ENCODE measurements at regions of chr4 and their contacts with region 1.

Region 1: GRCh38 chr4:94406668-94407437 is 44.9 kb upstream of the PDLIM5 start:
- DNase-seq: peak; percentile 86
- H3K4me3 ChIP-seq: no peak overlapping the region
- H3K27ac ChIP-seq: no peak overlapping the region
- H3K4me1 ChIP-seq: peaks cover 9% of the 10 kb centered on the region
- H3K27me3 ChIP-seq: no peaks in the 10 kb centered on the region
- CTCF ChIP-seq: peak; percentile 74 to 77
- POLR2A ChIP-seq: no peak

Region 2: GRCh38 chr4:94390804-94391410 is 15.9 kb before region 1 on chr4:
- CTCF ChIA-PET with region 1: interaction called, 16 read pairs
- POLR2A ChIA-PET with region 1: no interaction called
- dilution Hi-C with region 1: no loop called
- intact Hi-C with region 1: no loop called
- DNase-seq: peak; percentile 41
- H3K4me3 ChIP-seq: no peak overlapping the region
- H3K27ac ChIP-seq: no peak overlapping the region
- H3K4me1 ChIP-seq: no peaks in the 10 kb centered on the region
- H3K27me3 ChIP-seq: no peaks in the 10 kb centered on the region
- CTCF ChIP-seq: peak; percentile 33 to 39
- POLR2A ChIP-seq: no peak

Region 3: GRCh38 chr4:94459812-94460161 is 52.9 kb after region 1 on chr4:
- CTCF ChIA-PET with region 1: interaction called, 62 read pairs
- POLR2A ChIA-PET with region 1: no interaction called
- dilution Hi-C with region 1: no loop called
- intact Hi-C with region 1: no loop called
- DNase-seq: no peak
- H3K4me3 ChIP-seq: no peak overlapping the region
- H3K27ac ChIP-seq: no peak overlapping the region
- H3K4me1 ChIP-seq: peaks cover 40% of the 10 kb centered on the region
- H3K27me3 ChIP-seq: no peaks in the 10 kb centered on the region
- CTCF ChIP-seq: no peak
- POLR2A ChIP-seq: no peak

Region 4: GRCh38 chr4:94595879-94596483 is 189.1 kb after region 1 on chr4:
- CTCF ChIA-PET with region 1: interaction called, 21 read pairs
- POLR2A ChIA-PET with region 1: no interaction called
- dilution Hi-C with region 1: no loop called
- intact Hi-C with region 1: loop called (anchors 1 kb)
- DNase-seq: peak; percentile 76
- H3K4me3 ChIP-seq: no peak overlapping the region
- H3K27ac ChIP-seq: no peak overlapping the region
- H3K4me1 ChIP-seq: peaks cover 11% of the 10 kb centered on the region
- H3K27me3 ChIP-seq: no peaks in the 10 kb centered on the region
- CTCF ChIP-seq: peak; percentile 26 to 28
- POLR2A ChIP-seq: no peak

Region 5: GRCh38 chr4:94714365-94715160 is 307.7 kb after region 1 on chr4:
- CTCF ChIA-PET with region 1: no interaction called
- POLR2A ChIA-PET with region 1: no interaction called
- dilution Hi-C with region 1: no loop called
- intact Hi-C with region 1: loop called (anchors 10 kb)
- DNase-seq: peak; percentile 52
- H3K4me3 ChIP-seq: peak overlapping the region in 1 of 3 experiments; percentile 5
- H3K27ac ChIP-seq: no peak overlapping the region
- H3K4me1 ChIP-seq: no peaks in the 10 kb centered on the region
- H3K27me3 ChIP-seq: no peaks in the 10 kb centered on the region
- CTCF ChIP-seq: no peak
- POLR2A ChIP-seq: no peak

Measured in endothelial cell of umbilical vein (primary cell).